ENCODE measurements at regions of chr5 and their contacts with region 1.

Region 1: DNA sequence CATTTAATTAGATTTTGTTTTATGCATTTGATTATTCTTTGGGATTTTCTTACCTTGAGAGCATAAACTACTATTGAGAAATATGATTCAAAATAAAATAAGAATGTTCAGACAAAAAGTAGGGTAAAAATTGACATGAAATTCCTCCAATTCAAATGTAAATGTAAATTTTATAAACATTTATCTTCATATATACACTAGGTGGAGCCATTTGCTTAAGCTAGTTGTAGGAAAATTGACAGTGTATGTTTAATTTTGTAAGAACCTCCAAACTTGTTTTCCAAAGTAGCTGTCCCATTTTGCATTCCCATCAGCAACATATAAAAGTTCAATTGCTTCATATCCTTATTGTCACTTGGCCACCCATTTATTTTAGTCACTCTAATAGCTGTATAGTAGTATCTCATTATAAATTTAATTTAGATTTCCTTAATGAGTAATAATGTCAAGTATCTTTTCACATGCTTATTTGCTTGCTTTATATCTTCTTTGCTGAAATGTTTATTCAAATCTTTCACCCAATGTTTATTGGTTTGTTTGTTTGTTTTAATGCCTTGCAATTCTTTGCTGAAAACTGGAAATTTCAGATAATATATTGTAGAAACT is 37.6 kb upstream of the SLCO6A1 start:
- DNase-seq: peak; percentile 17
- H3K4me3 Mint-ChIP-seq: no peak overlapping the region
- H3K27ac Mint-ChIP-seq: no peak overlapping the region
- H3K4me1 Mint-ChIP-seq: no peaks in the 10 kb centered on the region
- H3K27me3 Mint-ChIP-seq: peaks cover 11% of the 10 kb centered on the region
- CTCF ChIP-seq: peak; percentile 54

Region 2: DNA sequence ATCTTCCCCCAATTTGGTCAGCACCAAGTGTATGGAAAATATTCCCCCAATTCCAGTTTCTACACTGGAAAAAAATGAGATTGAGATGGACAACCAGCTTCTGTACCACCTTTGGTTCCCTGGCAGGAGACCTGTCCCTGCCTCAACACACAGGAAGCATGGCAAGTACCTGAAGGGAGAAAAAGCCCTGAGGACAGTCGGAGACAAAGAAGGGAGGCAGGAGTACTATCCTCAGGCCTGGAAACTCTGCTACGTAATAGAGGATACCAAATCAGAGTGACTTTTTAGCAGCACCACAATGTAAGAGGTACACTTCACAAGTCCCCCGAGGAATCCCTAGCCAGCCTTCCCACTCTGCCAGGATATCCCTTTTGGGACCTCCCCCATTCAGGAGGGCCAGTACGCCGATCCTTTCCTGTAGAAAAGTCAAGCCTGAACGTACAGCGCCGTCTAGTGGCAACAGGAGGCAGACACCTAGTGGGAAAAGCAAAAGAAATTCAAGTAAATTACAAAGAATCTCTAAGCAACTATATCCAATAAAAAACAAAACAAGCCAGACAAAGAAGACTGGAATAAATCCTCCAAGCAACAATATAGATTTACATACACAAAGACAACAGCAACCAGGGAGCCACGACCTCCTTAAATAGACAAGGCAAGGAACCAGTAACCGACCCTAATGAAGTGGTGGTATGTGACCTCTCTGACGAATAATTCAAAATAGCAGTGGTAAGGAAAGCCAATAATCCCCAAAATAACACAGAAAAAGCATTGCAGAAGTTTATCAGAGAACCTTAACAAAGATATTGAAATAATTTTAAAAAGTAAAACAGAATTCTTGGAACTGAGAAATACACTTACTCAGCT is 25.7 kb after region 1 on chr5:
- CTCF ChIA-PET with region 1: interaction called, 11 read pairs
- POLR2A ChIA-PET with region 1: no interaction called
- intact Hi-C with region 1: no loop called
- DNase-seq: peak; percentile 57
- H3K4me3 Mint-ChIP-seq: no peak overlapping the region
- H3K27ac Mint-ChIP-seq: no peak overlapping the region
- H3K4me1 Mint-ChIP-seq: no peaks in the 10 kb centered on the region
- H3K27me3 Mint-ChIP-seq: peaks cover 39% of the 10 kb centered on the region
- CTCF ChIP-seq: peak; percentile 42

Region 3: DNA sequence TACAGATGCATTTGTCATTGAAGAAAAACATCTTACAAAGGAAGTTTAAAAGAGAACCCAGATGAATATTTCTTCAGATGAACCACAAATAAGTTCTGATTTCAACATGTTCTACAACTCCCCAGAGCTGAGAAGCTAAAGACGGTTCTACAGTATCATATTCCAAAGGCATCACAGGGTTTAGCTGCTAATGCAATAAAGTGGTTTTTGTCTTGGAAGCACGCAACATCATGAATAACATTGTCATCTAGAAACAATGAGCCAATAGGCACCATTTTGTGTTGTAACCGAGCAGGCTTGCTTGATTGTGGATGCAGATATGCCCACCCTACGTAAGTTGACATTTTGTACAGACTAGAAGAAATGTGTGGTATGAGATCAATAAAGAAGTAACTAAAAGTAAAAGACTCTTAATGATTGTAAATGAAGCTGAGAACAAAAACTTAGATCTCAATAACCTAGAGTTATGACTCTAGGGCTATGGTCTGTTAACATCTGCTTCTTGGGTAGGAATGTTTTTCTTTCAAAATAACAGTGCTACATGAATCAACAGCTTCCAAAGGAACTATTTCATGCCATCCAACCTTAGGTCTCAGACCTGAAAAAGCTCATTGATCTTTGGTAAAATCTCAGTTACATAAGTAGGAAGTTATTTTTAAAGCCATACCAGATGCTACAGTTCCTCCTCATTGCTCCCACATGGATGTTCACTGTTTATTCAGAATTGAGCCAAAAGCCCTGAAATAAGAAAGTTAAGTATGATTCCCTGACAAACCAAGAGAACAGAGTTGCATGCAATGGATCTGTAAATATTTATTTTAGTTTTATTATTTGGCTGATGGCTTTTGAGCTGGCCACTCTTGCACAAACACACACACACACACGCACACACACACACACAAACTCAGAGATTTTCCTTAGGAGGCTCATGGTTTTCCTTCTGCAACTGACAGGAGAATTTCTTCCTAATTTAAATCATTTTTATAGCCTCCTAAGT is 81.1 kb after region 1 on chr5:
- CTCF ChIA-PET with region 1: no interaction called
- POLR2A ChIA-PET with region 1: no interaction called
- intact Hi-C with region 1: no loop called
- DNase-seq: no peak
- H3K4me3 Mint-ChIP-seq: no peak overlapping the region
- H3K27ac Mint-ChIP-seq: no peak overlapping the region
- H3K4me1 Mint-ChIP-seq: no peaks in the 10 kb centered on the region
- H3K27me3 Mint-ChIP-seq: peaks cover 30% of the 10 kb centered on the region
- CTCF ChIP-seq: no peak

Region 4: DNA sequence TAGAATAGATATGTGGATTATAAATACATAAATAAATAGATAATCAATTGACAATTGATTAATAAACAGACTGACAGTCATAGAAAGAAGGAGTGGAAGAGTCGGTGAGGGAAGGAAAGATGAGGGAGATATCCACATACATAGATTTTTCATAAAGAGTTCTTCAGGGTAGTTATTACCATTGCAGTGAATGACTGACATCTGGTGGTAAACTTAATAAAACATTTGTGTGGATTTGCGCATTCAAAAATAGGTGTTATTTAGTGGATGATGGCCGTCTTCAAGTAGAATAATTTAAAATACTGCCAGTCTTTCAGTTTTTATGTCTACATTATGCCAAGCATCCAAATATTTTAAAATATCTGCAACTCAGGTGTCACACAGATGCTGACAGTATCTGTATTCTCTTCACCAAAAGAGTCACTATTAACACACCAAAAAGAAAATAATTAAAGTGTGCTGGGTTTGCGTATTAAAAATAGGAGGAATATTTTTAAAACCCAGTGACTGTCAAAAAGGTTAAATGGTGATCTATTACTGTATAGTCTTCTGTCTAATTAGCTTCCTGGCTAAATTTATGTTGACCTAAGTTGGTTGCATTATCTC is 504.7 kb after region 1 on chr5:
- CTCF ChIA-PET with region 1: interaction called, 29 read pairs
- POLR2A ChIA-PET with region 1: no interaction called
- intact Hi-C with region 1: loop called (anchors 5 kb)
- DNase-seq: peak; percentile 59
- H3K4me3 Mint-ChIP-seq: no peak overlapping the region
- H3K27ac Mint-ChIP-seq: no peak overlapping the region
- H3K4me1 Mint-ChIP-seq: no peaks in the 10 kb centered on the region
- H3K27me3 Mint-ChIP-seq: no peaks in the 10 kb centered on the region
- CTCF ChIP-seq: peak; percentile 53

Region 5: DNA sequence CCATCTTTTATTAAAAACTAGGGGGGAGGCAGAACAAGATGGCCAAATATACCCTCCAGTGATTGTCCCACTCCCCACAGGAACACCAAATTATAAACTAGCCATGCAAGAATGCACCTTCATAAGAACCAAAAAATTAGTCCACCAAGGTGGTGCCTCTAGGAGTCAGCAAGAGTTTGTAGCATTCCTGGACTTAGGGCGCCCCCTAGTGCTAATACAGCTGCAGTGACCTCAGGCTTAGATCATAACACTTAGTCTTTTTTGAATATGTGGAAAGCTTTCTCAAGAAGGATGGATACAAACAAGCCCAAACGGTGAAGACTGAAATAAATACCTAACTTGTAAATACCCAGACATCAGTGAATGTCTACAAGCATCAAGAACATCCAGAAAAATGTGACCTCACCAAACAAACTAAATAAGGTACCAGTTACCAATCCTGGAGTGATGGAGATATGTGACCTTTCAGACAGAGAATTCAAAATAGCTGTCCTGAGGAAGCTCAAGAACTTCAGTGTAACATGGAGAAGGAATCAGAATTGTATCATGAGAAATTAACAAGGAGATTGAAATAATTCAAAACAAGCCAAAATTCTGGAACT is 602.9 kb after region 1 on chr5:
- CTCF ChIA-PET with region 1: interaction called, 9 read pairs
- POLR2A ChIA-PET with region 1: no interaction called
- intact Hi-C with region 1: loop called (anchors 2 kb)
- DNase-seq: peak; percentile 87
- H3K4me3 Mint-ChIP-seq: no peak overlapping the region
- H3K27ac Mint-ChIP-seq: no peak overlapping the region
- H3K4me1 Mint-ChIP-seq: no peaks in the 10 kb centered on the region
- H3K27me3 Mint-ChIP-seq: no peaks in the 10 kb centered on the region
- CTCF ChIP-seq: peak; percentile 95

Region 6: DNA sequence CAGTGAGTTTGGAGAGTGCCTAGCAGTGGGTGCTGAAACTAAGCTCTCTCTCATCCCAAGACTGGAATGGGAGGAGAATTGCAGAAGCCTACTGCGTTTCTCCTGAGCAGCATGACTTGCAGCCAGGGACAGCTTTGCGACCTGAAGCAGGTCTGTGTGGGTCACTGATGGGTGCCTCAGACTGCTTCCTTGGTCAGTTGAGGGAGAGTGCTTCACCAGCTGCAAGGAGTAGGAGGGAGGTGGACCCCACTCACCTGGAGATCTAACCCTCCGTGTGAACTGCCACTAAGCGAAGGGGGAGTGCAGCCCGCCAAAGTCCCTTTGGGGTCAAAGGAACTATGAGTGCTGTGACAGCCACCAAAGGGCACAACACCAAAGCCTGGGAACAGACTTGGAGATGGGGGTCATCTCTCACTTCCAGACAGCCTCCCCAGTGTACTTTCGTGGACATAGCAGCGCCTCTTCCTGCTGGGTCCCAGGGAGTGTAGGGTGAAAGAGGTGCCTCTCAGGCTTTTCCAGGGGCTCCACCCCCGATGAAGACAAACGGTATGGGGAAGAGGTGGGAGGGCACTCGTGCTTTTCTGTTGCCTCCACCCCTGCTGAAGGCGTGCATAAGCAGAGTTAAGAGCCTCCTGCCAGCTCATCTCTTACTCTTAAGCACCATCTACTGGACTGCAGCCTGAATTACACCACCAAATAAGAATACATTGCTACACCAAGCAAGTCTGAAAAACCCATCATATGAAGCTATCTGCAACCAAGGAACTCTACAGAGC is 687.9 kb after region 1 on chr5:
- CTCF ChIA-PET with region 1: no interaction called
- POLR2A ChIA-PET with region 1: no interaction called
- intact Hi-C with region 1: loop called (anchors 2 kb)
- DNase-seq: peak; percentile 74
- H3K4me3 Mint-ChIP-seq: no peak overlapping the region
- H3K27ac Mint-ChIP-seq: no peak overlapping the region
- H3K4me1 Mint-ChIP-seq: no peaks in the 10 kb centered on the region
- H3K27me3 Mint-ChIP-seq: no peaks in the 10 kb centered on the region
- CTCF ChIP-seq: peak; percentile 65